WTC11 (cell line): ENCODE measurements at regions of chr14 and their contacts with region 1.

Region 1: DNA sequence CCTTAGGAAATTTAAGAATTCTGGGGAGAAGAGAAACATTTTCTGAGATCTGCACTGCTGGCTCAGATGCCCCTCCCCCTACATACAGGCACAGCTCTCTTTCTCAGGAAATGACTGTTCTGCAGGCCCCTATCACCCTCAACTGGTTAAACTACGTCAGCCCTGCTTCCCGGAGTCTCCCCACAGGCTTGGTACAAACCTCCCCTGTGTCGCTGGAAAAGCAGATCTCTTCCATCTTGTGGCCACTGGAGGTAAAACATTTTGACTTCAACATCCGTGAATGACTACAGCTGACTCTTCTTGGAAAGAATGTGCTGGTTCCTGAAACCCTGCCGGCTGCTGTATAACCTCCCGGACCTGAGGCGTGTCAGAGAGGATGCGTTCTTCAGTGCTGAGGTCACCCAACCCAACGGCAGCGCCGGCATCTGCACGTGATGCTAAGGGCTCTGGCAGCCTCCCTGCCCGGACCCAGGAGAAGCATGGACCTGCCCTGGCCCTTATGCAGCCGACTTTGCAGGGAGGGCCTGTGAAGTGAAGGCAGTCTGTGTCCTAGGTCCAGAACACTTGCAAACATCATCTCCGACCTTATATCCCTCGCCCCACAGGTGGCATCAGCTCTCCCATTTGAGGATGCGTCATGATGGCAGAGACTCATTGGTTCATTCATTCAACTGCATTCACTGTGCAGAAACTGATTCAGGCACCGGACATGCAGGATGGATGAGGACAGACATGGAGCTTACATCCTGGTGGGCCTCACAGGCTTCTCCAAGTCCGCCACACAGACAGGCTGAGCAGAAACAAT is 129.3 kb downstream of the GCH1 start:
- DNase-seq: peak; percentile 76
- ATAC-seq: peak; percentile 92
- H3K4me3 Mint-ChIP-seq: 0 out of 2 replicates have a peak overlapping the region, but pooled peaks have one; percentile 29
- H3K27ac Mint-ChIP-seq: peak overlapping the region; percentile 56
- H3K4me1 Mint-ChIP-seq: peaks cover 21% of the 10 kb centered on the region
- H3K27me3 Mint-ChIP-seq: no peaks in the 10 kb centered on the region
- CTCF ChIP-seq: peak; percentile 37

Region 2: DNA sequence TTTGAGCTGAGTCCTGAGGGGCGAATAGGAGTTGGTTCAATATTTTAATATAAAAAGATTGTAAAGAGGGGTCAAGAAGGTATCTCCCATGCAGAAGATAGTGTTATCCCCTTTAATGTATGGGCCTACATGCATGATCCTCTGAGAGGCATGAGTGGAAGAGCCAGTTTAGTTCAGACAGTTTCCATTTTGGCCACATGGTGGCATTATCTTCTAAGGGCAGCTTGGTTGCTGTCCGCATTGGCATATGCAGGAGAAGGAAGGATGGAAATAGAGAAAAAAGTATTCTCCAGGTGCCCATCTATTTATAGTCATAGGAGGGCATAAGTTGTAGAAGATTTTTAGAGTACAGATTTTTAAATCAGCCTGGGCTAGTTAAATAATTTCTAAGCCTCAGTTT is 201.1 kb before region 1 on chr14:
- CTCF ChIA-PET with region 1: interaction called, 138 read pairs
- POLR2A ChIA-PET with region 1: interaction called, 19 read pairs
- DNase-seq: peak; percentile 47
- ATAC-seq: peak; percentile 47
- H3K4me3 Mint-ChIP-seq: no peak overlapping the region
- H3K27ac Mint-ChIP-seq: no peak overlapping the region
- H3K4me1 Mint-ChIP-seq: peaks cover 15% of the 10 kb centered on the region
- H3K27me3 Mint-ChIP-seq: peaks cover 22% of the 10 kb centered on the region
- CTCF ChIP-seq: peak; percentile 52

Region 3: GRCh38 chr14:54673193-54674045 is 100.0 kb before region 1 on chr14:
- CTCF ChIA-PET with region 1: interaction called, 10 read pairs
- POLR2A ChIA-PET with region 1: no interaction called
- DNase-seq: no peak
- ATAC-seq: peak; percentile 72
- H3K4me3 Mint-ChIP-seq: 0 out of 2 replicates have a peak overlapping the region, but pooled peaks have one; percentile 16
- H3K27ac Mint-ChIP-seq: peak overlapping the region; percentile 92
- H3K4me1 Mint-ChIP-seq: peaks cover 79% of the 10 kb centered on the region
- H3K27me3 Mint-ChIP-seq: no peaks in the 10 kb centered on the region
- CTCF ChIP-seq: no peak

Region 4: DNA sequence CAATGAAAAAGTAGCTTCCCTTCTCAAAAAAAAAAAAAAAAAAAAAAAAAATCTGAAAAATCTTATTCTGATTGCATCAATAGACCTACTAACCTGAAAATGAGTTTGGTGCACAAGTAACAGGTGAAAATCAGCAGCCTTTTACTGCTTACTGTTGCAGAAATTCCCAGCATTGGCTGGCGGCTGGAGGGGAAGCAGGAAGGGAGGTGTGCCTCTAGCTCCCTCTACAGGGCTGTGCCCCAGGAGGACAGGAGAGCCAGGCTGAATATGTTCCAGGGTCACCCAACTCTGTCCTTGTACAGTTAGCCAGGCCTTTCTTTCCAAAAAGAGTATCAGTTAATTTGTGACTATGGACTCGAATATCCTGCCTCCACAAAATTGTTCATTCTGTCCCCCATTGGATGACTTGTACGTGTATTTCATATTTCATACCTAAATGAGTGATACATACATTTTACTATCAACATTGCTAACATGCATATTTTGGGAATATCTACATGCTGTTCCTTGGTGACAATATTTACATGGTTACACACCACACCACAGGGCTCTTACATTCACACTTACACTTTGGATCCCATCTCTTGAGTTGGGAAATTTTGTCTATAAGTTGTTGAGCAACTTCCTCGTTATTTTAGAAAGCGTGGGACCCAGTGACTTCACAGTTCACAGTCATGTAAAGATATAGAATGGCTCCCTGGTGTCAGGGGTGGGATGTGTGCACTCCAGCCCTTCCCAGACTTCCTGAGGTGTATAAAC is 81.7 kb before region 1 on chr14:
- CTCF ChIA-PET with region 1: interaction called, 31 read pairs
- POLR2A ChIA-PET with region 1: no interaction called
- DNase-seq: peak; percentile 84
- ATAC-seq: peak; percentile 96
- H3K4me3 Mint-ChIP-seq: no peak overlapping the region
- H3K27ac Mint-ChIP-seq: no peak overlapping the region
- H3K4me1 Mint-ChIP-seq: peaks cover 7% of the 10 kb centered on the region
- H3K27me3 Mint-ChIP-seq: no peaks in the 10 kb centered on the region
- CTCF ChIP-seq: peak; percentile 58

Region 5: DNA sequence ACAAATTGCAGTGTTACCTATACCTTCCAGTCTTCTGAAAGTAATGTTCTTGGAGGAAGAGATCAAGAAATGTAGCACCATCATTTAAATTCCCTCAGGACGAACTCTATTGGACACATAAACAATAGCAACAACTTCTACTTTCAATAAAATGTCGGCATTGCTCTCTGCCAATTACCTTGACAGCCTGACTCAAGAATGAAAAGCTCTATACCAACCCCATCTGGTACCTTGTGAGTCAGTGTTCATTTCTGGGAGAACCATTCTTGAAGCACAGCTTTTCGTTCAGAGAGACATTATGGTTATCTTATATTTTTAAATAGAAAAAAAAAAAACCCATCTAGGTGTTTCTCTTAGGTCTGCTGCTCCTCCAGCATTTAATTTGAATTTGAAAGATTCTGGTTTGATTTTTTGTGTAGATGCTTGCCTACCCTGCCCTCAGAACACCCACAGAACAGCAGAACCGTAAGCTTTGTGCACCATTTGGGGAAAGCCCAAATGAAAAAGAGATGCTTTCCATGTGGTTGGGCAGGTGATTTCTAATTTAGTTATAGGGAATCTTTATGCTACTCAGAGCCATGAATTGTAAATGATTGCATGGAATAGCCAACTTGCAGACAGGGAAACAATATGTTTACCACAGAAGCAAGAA is 50.5 kb before region 1 on chr14:
- CTCF ChIA-PET with region 1: interaction called, 38 read pairs
- POLR2A ChIA-PET with region 1: no interaction called
- DNase-seq: no peak
- ATAC-seq: peak; percentile 77
- H3K4me3 Mint-ChIP-seq: no peak overlapping the region
- H3K27ac Mint-ChIP-seq: no peak overlapping the region
- H3K4me1 Mint-ChIP-seq: peaks cover 8% of the 10 kb centered on the region
- H3K27me3 Mint-ChIP-seq: no peaks in the 10 kb centered on the region
- CTCF ChIP-seq: no peak

Region 6: GRCh38 chr14:54792288-54792687 is 18.9 kb after region 1 on chr14:
- CTCF ChIA-PET with region 1: interaction called, 16 read pairs
- POLR2A ChIA-PET with region 1: no interaction called
- DNase-seq: no peak
- ATAC-seq: peak; percentile 89
- H3K4me3 Mint-ChIP-seq: no peak overlapping the region
- H3K27ac Mint-ChIP-seq: no peak overlapping the region; the same call in 1 of the 2 replicates
- H3K4me1 Mint-ChIP-seq: peaks cover 14% of the 10 kb centered on the region
- H3K27me3 Mint-ChIP-seq: no peaks in the 10 kb centered on the region; the same call in 1 of the 2 replicates
- CTCF ChIP-seq: no peak

Region 7: DNA sequence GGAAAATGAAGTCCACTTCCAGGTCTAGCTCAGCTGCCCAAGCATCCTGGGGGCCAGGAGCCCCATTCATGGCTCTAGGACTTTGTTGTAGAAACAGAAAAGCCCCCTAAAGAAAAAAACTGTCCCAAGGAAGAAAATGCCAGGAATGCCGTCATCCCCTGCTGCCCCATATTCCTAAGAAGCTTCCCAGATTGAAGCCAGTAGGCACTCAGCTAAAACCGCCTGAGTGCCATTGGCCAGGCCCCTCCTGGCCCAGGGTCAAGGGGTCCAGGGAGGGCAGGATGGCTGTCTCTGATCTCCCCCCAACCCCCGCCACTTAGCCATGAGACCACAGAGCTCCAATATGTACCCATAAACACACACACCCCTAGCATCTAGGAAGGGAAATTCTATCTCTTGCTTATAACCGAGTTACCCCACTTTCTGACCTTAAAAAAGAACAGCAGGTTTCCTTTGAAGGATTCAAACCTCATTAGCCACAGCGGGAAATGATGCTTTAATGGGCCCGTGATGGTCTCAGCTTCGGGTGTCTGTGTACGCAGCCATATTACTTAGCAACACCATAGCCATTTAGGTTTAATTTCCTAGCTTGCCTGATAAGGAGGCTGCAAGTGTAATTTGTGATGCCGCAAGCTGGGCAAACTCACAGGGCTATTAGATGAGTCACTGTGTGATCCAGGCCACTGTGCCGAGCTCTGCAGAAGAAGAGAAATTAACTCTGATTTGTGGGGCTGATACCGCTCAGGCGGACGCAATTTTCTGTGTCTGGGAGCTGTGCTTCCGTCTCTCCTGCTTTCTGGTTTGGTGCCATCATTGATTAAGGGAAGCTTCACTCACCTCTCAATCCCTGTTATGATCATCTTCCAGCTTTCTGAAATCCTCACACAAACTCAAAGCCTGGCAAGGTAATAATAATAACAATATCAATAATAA is 45.1 kb after region 1 on chr14:
- CTCF ChIA-PET with region 1: interaction called, 14 read pairs
- POLR2A ChIA-PET with region 1: no interaction called
- DNase-seq: no peak
- ATAC-seq: no peak
- H3K4me3 Mint-ChIP-seq: no peak overlapping the region
- H3K27ac Mint-ChIP-seq: no peak overlapping the region
- H3K4me1 Mint-ChIP-seq: no peaks in the 10 kb centered on the region
- H3K27me3 Mint-ChIP-seq: no peaks in the 10 kb centered on the region
- CTCF ChIP-seq: no peak

Region 8: GRCh38 chr14:54854181-54854580 is 80.8 kb after region 1 on chr14:
- CTCF ChIA-PET with region 1: no interaction called
- POLR2A ChIA-PET with region 1: no interaction called
- DNase-seq: peak; percentile 37
- ATAC-seq: peak; percentile 99
- H3K4me3 Mint-ChIP-seq: no peak overlapping the region
- H3K27ac Mint-ChIP-seq: no peak overlapping the region
- H3K4me1 Mint-ChIP-seq: peaks cover 16% of the 10 kb centered on the region
- H3K27me3 Mint-ChIP-seq: no peaks in the 10 kb centered on the region
- CTCF ChIP-seq: no peak